Dorsolateral prefrontal cortex (tissue), 120 donors: ENCODE measurements at regions of chr18 and their contacts with region 1.

Region 1: DNA sequence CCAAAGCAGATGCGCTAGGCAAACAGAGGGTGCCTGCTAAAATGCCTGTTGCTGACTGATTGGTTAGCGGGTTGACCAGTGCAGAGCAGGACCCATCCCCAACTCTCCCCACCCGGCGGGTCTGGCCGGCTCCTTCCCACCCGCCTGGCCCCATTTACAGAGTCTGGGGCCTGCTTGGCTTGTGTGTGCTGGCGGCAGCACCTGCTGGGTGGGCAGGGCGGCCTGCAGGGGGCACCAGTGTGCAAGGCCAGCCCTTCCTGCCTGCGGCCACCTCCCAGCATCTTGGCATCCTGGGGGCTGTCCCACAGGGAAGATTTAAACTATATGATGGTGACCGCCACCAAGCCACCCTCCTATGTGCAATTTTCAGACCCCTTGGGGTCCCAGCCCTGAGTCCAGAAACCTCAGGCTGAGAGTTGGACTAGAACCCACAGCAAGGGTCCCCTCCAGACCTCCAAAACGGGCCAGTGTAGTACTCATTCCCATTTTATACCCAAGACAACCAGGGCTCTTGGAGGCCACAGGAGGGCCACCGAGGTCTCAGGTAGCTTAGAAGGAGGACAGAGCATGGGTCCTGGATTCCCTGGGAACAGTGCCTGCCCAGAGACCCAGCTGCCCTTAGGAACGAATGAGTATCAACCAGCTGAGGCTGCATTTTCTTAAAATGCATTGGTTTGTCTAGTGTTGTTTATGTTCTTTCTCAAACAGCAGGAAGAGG is 173.6 kb downstream of the SMAD7 start:
- DNase-seq: peak in 9 of 10 donors; percentile 57 to 83 (median 65)
- H3K4me3 ChIP-seq: no peak overlapping the region
- H3K27ac ChIP-seq: peak overlapping the region in 53 of 59 donors; percentile 7 to 82 (median 51)
- H3K27me3 ChIP-seq: no peaks in the 10 kb centered on the region
- CTCF ChIP-seq: peak; percentile 64 to 97 (median 88)

Region 2: GRCh38 chr18:48934723-48935432 is 157.7 kb after region 1 on chr18:
- intact Hi-C with region 1: loop called in 1 of 2 experiments (anchors 5 kb)
- DNase-seq: peak in 1 of 10 donors; percentile 67
- H3K4me3 ChIP-seq: peak overlapping the region in 25 of 59 donors; percentile 0 to 48 (median 15)
- H3K27ac ChIP-seq: peak overlapping the region; percentile 35 to 93 (median 84)
- H3K27me3 ChIP-seq: no peaks in the 10 kb centered on the region
- CTCF ChIP-seq: no peak

Region 3: DNA sequence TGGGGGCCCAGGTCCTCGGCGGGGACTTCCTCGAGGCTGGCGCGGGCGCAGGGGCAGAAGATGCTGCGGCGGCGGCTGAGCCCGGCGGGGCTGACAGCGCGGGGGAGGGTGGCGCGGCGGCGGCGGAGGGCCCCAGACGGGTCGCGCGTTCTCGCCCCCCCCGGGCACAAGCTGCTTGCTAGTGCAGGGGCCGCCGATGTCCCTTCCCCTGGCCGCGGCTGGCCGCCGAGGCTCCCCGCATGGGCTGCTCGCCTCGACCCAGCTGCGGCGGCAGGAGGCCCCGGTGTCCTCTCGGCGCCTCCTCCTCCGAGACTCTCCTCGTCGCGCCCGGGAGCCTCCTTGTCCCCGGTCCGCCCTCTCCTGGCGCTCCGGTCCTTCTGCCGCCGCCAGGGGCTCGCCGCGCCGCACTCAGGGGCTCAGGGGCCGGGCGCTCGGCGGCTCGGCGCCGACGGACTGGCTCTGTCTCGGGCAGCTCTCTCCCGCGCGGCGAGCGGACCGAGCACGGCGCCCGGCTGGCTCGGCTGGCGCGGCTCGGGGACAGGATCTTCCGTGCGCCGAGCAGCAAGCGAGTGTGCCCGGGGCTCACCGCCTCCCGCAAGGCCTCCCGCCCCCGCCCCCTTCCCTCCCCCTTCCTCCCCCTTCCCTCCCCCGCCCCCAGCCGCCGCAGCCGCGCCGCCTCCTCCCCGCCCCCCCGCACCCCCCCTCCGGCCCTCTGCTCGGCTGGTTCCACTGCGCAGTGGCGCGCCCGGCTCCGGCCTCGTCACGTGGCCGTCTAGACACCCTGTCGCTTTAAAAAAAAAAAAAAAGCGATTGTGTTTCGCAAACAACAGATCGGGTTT is 174.5 kb after region 1 on chr18:
- intact Hi-C with region 1: loop called (anchors 2 kb)
- DNase-seq: peak; percentile 70 to 86 (median 82)
- H3K4me3 ChIP-seq: peak overlapping the region; percentile 67 to 94 (median 84)
- H3K27ac ChIP-seq: peak overlapping the region; percentile 93 to 100 (median 98)
- H3K27me3 ChIP-seq: no peaks in the 10 kb centered on the region
- CTCF ChIP-seq: peak in 27 of 56 donors; percentile 7 to 48 (median 31)

Region 4: GRCh38 chr18:49183921-49184320 is 406.7 kb after region 1 on chr18:
- intact Hi-C with region 1: loop called in 1 of 2 experiments (anchors 5 kb)
- DNase-seq: no peak
- H3K4me3 ChIP-seq: no peak overlapping the region
- H3K27ac ChIP-seq: peak overlapping the region in 36 of 59 donors; percentile 6 to 96 (median 50)
- H3K27me3 ChIP-seq: no peaks in the 10 kb centered on the region
- CTCF ChIP-seq: no peak

Region 5: GRCh38 chr18:49412679-49413078 is 635.5 kb after region 1 on chr18:
- intact Hi-C with region 1: loop called in 1 of 2 experiments (anchors 10 kb)
- DNase-seq: no peak
- H3K4me3 ChIP-seq: no peak overlapping the region
- H3K27ac ChIP-seq: peak overlapping the region in 20 of 59 donors; percentile 1 to 61 (median 16)
- H3K27me3 ChIP-seq: no peaks in the 10 kb centered on the region
- CTCF ChIP-seq: no peak

Region 6: DNA sequence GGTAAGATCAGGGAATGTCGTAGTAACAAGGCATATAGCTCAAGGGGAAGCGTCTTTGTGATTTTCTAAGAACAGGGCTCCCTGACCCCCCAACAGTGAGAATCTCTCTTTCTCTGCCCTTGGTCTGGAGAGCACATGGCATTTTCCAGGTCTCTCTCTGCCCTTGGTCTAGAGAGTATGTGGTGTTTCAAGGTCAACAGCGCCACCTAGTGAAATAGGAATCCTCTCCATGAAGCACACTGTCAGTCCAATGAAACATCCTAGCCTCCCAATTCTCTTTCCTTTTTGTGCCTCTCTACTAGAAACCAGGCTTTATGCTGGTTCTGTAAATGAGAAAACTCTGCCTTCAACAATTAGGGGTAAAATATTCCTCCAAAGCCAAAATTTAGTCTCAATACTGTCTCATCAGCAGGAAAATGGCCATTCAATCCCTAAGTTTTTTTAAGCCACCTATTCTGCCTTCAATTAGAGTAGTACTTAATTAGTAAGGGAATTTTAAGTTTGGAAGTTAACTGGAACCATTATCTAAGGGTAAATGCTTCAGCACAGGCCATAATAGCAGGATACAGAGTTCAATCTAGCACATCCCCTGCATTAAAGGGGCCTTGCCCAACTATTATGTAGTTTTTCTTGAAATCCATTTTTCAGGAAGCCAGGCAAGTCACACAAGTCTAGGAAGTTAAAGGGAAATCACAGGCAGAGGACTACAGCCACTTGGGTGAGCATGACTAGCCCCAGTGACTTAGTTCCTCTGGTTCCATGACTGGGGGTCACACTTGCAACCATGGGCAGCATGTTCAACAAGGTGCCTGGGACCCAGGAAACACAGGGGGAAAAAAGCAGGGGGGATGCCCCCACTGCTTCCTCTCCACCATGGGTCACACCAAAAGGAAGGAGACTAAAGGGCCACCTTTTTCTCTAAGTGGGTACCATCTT is 670.9 kb after region 1 on chr18:
- intact Hi-C with region 1: no loop called
- DNase-seq: no peak
- H3K4me3 ChIP-seq: no peak overlapping the region
- H3K27ac ChIP-seq: no peak overlapping the region
- H3K27me3 ChIP-seq: no peaks in the 10 kb centered on the region
- CTCF ChIP-seq: peak in 46 of 56 donors; percentile 12 to 58 (median 33)